Ascending aorta (tissue), 2 donors: ENCODE measurements at regions of chr1 and their contacts with region 1.

Region 1: GRCh38 chr1:162756523-162756922 is 34.0 kb upstream of the HSD17B7 start:
- DNase-seq: no peak
- H3K4me3 ChIP-seq: no peak overlapping the region
- H3K27ac ChIP-seq: no peak overlapping the region
- H3K4me1 ChIP-seq: no peaks in the 10 kb centered on the region
- H3K27me3 ChIP-seq: no peaks in the 10 kb centered on the region
- CTCF ChIP-seq: no peak

Region 2: GRCh38 chr1:162612606-162613400 is 143.7 kb before region 1 on chr1:
- intact Hi-C with region 1: loop called (anchors 2 kb)
- DNase-seq: no peak
- H3K4me3 ChIP-seq: no peak overlapping the region
- H3K27ac ChIP-seq: peak overlapping the region; percentile 63 to 77
- H3K4me1 ChIP-seq: peaks cover 3 to 12% of the 10 kb centered on the region in 2 donors
- H3K27me3 ChIP-seq: no peaks in the 10 kb centered on the region
- CTCF ChIP-seq: no peak

Region 3: DNA sequence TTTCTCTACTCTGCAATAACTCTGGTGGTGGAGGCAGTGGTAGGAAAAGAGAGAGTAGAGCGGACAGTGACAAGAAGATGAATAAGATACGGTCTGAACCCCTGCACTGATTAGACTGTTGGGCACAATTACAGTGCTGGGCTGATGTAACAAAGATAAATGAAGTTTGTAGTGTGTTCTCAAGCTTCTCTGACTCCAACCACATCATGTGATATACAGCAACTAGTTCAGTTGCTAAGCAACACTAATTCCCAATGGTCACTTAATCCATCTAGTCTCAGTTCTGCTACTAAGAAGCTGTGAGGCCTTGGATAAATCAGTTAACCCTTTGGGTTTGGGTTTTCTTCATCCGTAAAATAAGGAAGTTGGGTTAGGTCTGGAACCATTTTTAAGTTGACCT is 106.9 kb before region 1 on chr1:
- intact Hi-C with region 1: no loop called
- DNase-seq: no peak
- H3K4me3 ChIP-seq: no peak overlapping the region
- H3K27ac ChIP-seq: no peak overlapping the region
- H3K4me1 ChIP-seq: no peaks in the 10 kb centered on the region
- H3K27me3 ChIP-seq: no peaks in the 10 kb centered on the region
- CTCF ChIP-seq: no peak

Region 4: DNA sequence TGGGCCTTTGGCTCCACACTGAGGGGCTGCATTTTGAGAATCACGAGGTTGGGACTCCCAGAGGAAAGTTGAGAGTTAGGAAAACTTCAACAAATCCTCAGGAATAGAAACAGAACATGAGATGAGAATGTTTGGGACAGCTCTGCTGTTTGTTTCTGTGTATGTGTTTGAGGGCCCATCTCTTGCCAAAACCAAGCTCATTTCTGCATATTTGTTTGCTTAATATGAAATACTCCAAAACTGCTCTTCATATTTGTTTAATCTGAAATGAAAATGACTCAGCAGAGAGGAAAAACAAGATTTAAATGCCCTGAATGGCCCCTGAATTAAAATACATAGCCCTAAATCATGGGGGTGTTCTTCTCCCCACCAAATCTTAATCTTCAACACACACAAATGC is 46.2 kb before region 1 on chr1:
- intact Hi-C with region 1: no loop called
- DNase-seq: no peak
- H3K4me3 ChIP-seq: no peak overlapping the region
- H3K27ac ChIP-seq: no peak overlapping the region
- H3K4me1 ChIP-seq: peaks cover 0 to 20% of the 10 kb centered on the region in 2 donors
- H3K27me3 ChIP-seq: no peaks in the 10 kb centered on the region
- CTCF ChIP-seq: no peak